Aorta (tissue), 5 donors: ENCODE measurements at regions of chr4 and their contacts with region 1.

Region 1: DNA sequence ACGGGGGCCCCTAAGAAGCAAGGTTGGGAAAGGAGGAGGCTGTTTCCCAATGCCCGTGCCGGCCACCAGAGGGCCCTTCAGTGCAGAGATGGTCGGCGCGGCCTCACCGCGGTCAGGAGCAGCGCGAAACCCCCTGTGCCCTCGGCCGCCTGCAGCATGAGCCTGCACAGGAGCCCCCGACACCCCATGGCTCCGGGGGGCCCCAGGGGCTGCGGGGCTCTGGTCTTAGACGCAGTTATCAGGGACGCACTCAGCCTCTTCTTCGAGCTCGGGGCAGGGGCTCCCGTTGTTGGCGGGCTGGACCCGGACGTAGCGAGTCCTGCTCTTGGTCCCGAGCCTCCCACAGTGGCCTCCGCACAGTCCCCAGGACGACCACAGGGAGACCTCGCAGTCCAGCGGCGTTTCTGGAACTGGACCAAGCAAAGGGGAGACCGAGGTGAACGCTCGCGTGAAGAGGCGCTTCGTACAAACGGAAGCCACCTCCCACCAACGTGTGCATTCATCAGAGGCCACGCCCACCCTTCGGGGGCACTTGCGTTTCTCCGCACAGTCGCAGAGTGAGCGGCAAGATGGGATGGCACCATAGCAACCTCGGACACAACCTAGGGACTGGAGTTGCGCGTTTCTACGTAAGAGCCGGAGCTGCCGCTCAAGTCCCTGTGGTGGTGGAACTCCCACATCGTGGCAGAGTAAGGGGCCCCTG is 5.0 kb downstream of the SPON2 start:
- DNase-seq: peak; percentile 87 to 95
- ATAC-seq: peak; percentile 90
- H3K4me3 ChIP-seq: peak overlapping the region; percentile 17 to 45
- H3K27ac ChIP-seq: no peak overlapping the region
- H3K4me1 ChIP-seq: no peaks in the 10 kb centered on the region
- H3K27me3 ChIP-seq: no peaks in the 10 kb centered on the region

Region 2: DNA sequence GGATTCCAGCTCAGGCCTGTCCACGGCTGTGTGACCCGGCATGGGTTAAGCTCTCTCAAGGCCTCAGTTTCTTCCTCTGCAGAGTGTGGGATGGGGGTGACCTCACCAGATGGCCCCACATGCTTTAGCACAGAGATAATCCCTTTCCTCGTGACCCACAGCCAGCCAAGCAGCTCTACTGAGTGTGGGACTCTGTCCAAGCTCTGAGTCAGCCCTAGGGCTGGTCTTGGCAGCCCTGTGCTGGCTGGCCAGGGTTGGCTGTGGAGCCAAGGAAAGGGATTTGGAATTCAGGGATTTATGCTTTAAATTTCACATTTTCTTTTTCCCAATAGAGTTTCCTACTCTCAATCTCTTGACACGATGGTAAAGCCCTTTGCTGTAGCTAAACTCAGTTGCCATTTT is 24.7 kb after region 1 on chr4:
- intact Hi-C with region 1: loop called in 1 of 2 experiments (anchors 2 kb)
- DNase-seq: peak; percentile 92 to 93
- ATAC-seq: peak; percentile 95
- H3K4me3 ChIP-seq: no peak overlapping the region
- H3K27ac ChIP-seq: peak overlapping the region in 1 of 2 donors; percentile 72
- H3K4me1 ChIP-seq: no peaks in the 10 kb centered on the region
- H3K27me3 ChIP-seq: no peaks in the 10 kb centered on the region

Region 3: DNA sequence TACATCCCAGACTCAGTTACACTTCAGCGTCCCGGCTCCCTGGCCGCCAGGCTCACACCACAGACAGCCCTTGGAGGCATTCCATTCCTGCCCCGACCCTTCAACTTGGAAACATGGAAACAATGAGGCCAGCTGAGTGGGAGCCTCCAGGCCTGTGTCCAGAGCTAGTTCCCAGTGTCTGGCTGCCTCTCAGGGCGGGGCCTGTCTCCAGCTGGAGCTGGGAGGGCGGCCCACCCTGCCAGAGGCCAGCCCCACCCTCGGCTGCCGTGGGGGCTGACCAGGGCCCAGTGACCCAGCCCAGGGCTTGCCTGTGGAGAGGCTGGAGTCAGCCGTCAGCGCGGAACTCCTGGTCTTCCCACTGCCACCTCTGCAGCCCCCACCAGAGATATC is 42.4 kb after region 1 on chr4:
- intact Hi-C with region 1: loop called in 1 of 2 experiments (anchors 5 kb)
- DNase-seq: peak; percentile 89 to 91
- ATAC-seq: peak; percentile 82
- H3K4me3 ChIP-seq: no peak overlapping the region
- H3K27ac ChIP-seq: no peak overlapping the region
- H3K4me1 ChIP-seq: no peaks in the 10 kb centered on the region
- H3K27me3 ChIP-seq: no peaks in the 10 kb centered on the region

Region 4: GRCh38 chr4:1266881-1267763 is 99.7 kb after region 1 on chr4:
- intact Hi-C with region 1: loop called in 1 of 2 experiments (anchors 2 kb)
- DNase-seq: no peak
- ATAC-seq: no peak
- H3K4me3 ChIP-seq: no peak overlapping the region
- H3K27ac ChIP-seq: no peak overlapping the region
- H3K4me1 ChIP-seq: no peaks in the 10 kb centered on the region
- H3K27me3 ChIP-seq: no peaks in the 10 kb centered on the region